ENCODE measurements at regions of chr4 and their contacts with region 1.

Region 1: DNA sequence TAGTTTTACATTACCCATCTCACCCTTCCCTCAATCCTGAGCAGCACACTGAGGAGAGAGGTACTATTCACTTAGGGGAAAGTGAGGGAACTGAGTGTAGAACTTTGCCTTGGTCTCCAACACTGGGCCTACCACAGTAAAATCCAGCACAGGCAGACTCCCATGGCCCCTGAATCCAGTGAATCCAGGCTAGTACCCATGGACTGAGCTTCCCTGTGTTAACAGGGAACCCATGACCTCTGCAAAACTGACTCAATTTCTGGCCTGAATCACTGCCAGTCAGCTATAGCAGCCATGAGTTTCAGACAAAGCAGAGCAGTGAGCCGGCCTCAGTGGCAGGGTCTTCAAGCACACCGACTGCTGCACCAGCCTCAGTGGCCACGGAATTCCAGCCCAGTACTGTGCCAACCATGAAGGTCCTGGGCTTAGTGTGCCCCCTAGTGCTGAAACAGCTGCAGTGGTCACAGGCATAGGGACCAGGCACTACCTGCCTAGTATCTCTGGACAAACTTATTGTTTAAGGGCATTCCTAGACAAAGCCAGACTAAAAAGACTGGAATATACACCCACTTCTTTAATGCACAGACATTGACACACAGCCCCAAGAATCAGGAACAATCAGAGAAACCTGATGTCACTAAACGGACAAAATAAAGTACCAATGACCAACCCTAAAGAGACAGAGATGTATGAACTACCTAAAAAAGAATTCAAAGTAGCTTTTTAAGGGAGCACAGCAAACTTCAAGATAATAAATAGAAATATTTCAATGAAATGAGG is 127.4 kb upstream of the RPL34 start:
- DNase-seq: no peak
- H3K4me3 ChIP-seq: no peak overlapping the region
- H3K27ac ChIP-seq: no peak overlapping the region
- H3K27me3 ChIP-seq: peaks cover 2% of the 10 kb centered on the region
- CTCF ChIP-seq: peak; percentile 62

Region 2: GRCh38 chr4:108060164-108060563 is 432.8 kb before region 1 on chr4:
- CTCF ChIA-PET with region 1: interaction called, 19 read pairs
- POLR2A ChIA-PET with region 1: no interaction called
- DNase-seq: peak; percentile 4
- H3K4me3 ChIP-seq: no peak overlapping the region
- H3K27ac ChIP-seq: no peak overlapping the region
- H3K27me3 ChIP-seq: peaks cover 4% of the 10 kb centered on the region
- CTCF ChIP-seq: peak; percentile 29

Region 3: DNA sequence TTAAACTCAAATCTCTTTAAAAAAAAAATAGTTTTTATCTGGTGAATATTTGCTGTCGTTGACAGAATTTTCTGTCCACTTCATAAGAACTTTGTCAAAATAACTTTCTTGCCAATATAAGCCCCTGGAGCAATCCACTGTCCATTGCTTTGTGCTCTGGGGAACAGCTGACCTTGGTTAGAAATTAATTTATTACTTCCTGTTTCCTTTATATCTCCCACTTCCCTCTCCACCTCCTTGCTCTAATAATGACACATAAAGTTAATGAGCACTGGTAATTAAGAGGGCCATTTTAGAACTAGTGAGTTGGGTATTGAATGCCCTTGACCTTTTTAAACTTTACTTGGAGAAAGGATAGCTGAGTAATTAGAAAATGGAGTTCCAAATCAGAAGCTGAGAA is 172.9 kb before region 1 on chr4:
- CTCF ChIA-PET with region 1: no interaction called
- POLR2A ChIA-PET with region 1: no interaction called
- DNase-seq: no peak
- H3K4me3 ChIP-seq: no peak overlapping the region
- H3K27ac ChIP-seq: no peak overlapping the region
- H3K27me3 ChIP-seq: peaks cover 2% of the 10 kb centered on the region
- CTCF ChIP-seq: no peak

Region 4: GRCh38 chr4:108581083-108581482 is 88.1 kb after region 1 on chr4:
- CTCF ChIA-PET with region 1: no interaction called
- POLR2A ChIA-PET with region 1: no interaction called
- DNase-seq: no peak
- H3K4me3 ChIP-seq: no peak overlapping the region
- H3K27ac ChIP-seq: no peak overlapping the region
- H3K27me3 ChIP-seq: no peaks in the 10 kb centered on the region
- CTCF ChIP-seq: no peak